ENCODE measurements at regions of chr12 and their contacts with region 1.

Region 1: GRCh38 chr12:107131832-107132616 is 38.7 kb upstream of the CRY1 start:
- DNase-seq: peak; percentile 75
- H3K27ac ChIP-seq: no peak overlapping the region
- CTCF ChIP-seq: peak; percentile 75

Region 2: GRCh38 chr12:107317751-107318613 is 186.0 kb after region 1 on chr12:
- CTCF ChIA-PET with region 1: interaction called, 17 read pairs
- POLR2A ChIA-PET with region 1: no interaction called
- DNase-seq: peak; percentile 92
- H3K27ac ChIP-seq: peak overlapping the region; percentile 92
- CTCF ChIP-seq: peak; percentile 31; the same call in 1 of the 2 replicates

Region 3: DNA sequence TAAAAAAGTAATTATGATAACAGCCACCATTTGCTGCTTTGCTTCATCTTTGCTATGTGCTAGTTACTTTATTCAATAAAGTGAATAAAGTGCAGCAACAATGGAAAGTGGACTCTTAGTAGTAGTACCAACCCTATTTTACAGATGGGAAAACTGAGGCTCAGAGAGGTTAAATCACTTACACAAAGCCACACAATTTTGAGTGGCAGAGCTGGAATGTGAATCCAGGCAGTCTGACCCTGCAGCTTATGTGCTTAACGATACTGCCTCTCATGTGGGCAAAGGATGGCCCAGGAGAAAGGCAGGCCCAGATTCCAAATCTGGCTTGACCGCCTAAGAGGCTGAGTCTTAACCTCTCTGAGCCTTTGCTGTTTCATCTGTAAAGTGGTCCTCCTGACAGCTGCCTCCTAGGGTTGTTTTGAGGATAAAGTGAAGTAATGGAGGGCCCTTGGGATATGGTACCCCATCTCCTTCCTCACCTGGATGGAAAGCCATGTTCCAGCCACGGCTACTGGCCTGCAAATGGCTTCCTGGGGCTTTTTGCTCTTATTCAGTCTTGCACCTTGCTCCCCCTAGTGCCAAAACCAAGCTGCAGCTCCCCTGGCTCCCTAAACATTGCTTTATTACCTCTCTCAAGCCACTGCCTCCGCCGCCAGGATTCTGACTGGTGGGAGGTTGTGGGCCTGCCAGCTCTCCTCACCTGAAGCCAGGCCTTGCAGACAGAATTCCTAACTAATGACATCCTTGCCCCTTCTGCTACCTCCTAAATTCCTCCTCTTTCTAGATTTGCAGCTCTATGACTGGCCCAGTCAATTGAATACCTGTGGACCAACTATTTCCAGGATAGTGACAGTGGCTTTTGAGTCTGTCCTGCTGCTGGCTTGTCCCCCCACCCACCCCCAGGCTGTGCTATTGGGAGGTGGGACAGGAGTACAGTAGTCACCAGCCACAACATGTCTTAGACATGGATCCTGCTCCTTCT is 270.3 kb after region 1 on chr12:
- CTCF ChIA-PET with region 1: interaction called, 28 read pairs
- POLR2A ChIA-PET with region 1: no interaction called
- DNase-seq: peak; percentile 70
- H3K27ac ChIP-seq: peak overlapping the region; percentile 14; the same call in 1 of the 2 replicates
- CTCF ChIP-seq: peak; percentile 74

Region 4: GRCh38 chr12:107607464-107608392 is 475.7 kb after region 1 on chr12:
- CTCF ChIA-PET with region 1: interaction called, 77 read pairs
- POLR2A ChIA-PET with region 1: no interaction called
- DNase-seq: peak; percentile 76
- H3K27ac ChIP-seq: no peak overlapping the region
- CTCF ChIP-seq: peak; percentile 90

Measured in RWPE1 (cell line).